Activated CD4-positive, alpha-beta T cell treated with anti-CD3 and anti-CD28 coated beads for 36 hours (primary cell): ENCODE measurements at regions of chr17 and their contacts with region 1.

Region 1: DNA sequence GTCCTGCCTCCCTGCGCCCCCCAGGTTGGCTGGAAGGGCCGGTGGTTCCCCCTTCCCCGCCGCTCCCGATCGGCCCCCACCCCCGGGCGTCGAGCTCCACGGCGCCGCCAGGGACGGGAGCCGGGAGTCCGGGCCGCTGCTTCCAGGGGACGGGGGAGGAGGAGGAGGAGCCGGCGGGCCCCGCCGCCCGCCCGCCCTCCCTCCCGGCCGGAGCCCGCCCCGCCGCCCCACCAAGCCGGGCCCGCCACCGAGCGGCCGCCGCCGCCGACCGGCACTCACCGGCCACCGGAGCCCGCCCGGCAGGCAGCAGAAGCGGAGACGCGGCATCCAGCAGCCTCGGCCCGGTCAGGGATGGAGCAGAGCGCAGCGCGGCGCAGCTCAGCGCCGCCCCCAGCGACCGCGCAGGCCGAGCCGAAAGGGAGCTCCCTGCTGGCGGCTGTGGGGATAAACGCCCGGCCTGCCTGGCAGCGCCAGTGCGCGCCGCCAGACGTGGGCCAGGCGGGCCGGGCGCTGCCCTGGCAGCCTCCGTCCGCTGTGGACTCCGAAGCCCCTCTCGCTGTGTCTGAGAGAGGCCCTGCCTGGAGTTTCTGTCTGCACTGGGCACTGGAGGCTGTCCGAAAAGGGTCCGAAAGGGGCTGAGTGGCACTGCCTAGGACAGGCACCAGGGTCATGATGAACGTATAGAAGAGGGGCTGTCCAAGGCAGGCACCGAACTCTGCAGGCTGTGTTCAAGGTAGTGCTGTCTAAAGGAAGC is at the start of gene MYO18A:
- DNase-seq: peak; percentile 90
- ATAC-seq: peak; percentile 93
- H3K4me3 Mint-ChIP-seq: peak within 1 kb of the TSS; percentile 23
- H3K27ac Mint-ChIP-seq: no peak within 1 kb of the TSS
- H3K4me1 Mint-ChIP-seq: peaks cover 28% of the 10 kb centered on the region
- H3K27me3 Mint-ChIP-seq: no peaks in the 10 kb centered on the region
- total RNA-seq, gene MYO18A: 31.9 to 38.2 TPM

Region 2: DNA sequence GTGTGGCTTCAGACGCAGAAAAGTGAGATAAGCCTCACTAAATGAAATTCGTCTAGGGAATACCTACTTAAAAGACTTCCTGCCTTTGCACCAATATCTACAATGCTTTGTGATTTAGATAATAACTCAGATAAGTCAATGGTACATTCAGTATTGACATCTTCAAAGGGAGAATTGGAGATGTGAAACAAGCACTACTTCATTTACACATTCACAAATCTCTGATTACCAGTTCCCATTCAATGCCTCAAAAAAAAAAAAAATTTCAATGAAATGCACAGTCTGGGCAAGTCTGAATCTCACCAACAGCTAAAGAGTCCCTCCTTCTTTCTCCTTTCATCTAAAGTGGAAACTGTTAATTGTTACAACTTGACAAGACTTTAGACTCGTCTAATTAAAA is 232.6 kb before region 1 on chr17:
- CTCF ChIA-PET with region 1: no interaction called
- POLR2A ChIA-PET with region 1: no interaction called
- intact Hi-C with region 1: no loop called
- DNase-seq: no peak
- ATAC-seq: no peak
- H3K4me3 Mint-ChIP-seq: no peak overlapping the region
- H3K27ac Mint-ChIP-seq: peak overlapping the region; percentile 92
- H3K4me1 Mint-ChIP-seq: peaks cover 60% of the 10 kb centered on the region
- H3K27me3 Mint-ChIP-seq: no peaks in the 10 kb centered on the region

Region 3: DNA sequence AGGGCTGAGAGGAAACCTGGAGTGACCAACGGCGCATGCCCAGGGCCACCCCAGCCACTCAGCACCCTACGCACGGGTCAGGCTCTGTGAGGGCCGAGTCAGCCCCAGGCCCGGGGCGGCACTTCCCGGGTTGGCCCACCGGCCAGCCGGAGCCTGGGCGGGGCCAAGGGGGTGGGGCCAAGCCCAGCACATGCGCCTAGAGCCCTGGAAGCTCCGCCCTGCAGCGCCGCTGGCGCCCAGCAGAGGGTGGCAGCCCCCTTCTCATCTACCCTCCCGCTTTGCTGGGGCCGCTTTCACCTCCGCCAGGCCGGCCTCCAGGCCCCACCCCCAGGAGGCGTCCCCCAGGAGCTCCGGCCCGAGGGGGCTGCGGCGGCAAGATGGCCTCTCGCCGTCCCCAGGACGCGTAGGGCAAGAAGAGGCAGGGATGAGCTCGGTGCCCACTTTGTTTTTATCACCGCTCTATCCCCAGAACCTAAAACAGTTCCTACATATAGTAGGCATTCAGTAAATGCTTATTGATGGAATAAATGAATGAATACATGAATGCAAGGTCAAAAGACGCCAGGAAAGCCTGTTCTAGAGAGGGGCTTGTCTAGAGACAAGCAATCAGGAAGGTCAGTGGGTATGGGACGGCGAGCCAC is 31.3 kb before region 1 on chr17:
- CTCF ChIA-PET with region 1: interaction called, 300 read pairs
- POLR2A ChIA-PET with region 1: interaction called, 6 read pairs
- intact Hi-C with region 1: loop called (anchors 1 kb)
- DNase-seq: peak; percentile 96
- ATAC-seq: peak; percentile 93
- H3K4me3 Mint-ChIP-seq: peak overlapping the region; percentile 56
- H3K27ac Mint-ChIP-seq: peak overlapping the region; percentile 90
- H3K4me1 Mint-ChIP-seq: peaks cover 48% of the 10 kb centered on the region
- H3K27me3 Mint-ChIP-seq: no peaks in the 10 kb centered on the region

Region 4: GRCh38 chr17:29155227-29155965 is 24.8 kb before region 1 on chr17:
- CTCF ChIA-PET with region 1: interaction called, 300 read pairs
- POLR2A ChIA-PET with region 1: interaction called, 3 read pairs
- intact Hi-C with region 1: loop called in 1 of 2 experiments (anchors 1 kb)
- DNase-seq: peak; percentile 86
- ATAC-seq: peak; percentile 97
- H3K4me3 Mint-ChIP-seq: peak overlapping the region; percentile 45
- H3K27ac Mint-ChIP-seq: peak overlapping the region; percentile 83
- H3K4me1 Mint-ChIP-seq: peaks cover 32% of the 10 kb centered on the region
- H3K27me3 Mint-ChIP-seq: no peaks in the 10 kb centered on the region

Region 5: DNA sequence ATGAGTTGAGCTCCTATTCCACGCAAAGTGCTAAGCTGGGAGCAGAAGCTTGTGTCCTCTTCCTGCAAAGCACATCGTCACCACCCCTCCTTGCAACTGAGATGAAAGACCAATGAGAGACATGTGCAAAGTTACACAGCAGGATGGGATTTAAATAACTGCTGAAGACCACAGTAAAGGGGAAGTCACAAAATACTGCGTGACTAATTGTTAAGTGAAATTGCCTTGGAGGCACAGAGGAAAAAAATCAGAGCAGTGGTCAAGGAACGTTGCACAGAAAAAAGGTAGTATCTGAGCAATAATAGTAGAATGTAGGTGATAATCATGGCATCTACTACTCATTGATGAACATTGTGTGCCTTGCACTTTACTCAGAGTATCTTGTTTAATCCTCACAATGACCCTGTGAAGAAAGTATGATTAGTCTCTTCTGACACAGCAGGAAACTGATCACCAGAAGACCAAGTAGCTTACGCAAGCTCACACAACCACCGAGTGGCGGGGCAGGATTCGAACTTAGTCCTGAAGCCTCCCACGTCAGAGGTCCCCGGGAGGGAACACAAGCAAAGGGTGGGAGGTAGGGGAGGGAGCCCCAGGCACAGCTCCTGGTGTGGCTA is 15.4 kb after region 1 on chr17:
- CTCF ChIA-PET with region 1: interaction called, 19 read pairs
- POLR2A ChIA-PET with region 1: no interaction called
- intact Hi-C with region 1: no loop called
- DNase-seq: no peak
- ATAC-seq: peak; percentile 39
- H3K4me3 Mint-ChIP-seq: no peak overlapping the region
- H3K27ac Mint-ChIP-seq: no peak overlapping the region
- H3K4me1 Mint-ChIP-seq: peaks cover 2% of the 10 kb centered on the region
- H3K27me3 Mint-ChIP-seq: peaks cover 8% of the 10 kb centered on the region

Region 6: DNA sequence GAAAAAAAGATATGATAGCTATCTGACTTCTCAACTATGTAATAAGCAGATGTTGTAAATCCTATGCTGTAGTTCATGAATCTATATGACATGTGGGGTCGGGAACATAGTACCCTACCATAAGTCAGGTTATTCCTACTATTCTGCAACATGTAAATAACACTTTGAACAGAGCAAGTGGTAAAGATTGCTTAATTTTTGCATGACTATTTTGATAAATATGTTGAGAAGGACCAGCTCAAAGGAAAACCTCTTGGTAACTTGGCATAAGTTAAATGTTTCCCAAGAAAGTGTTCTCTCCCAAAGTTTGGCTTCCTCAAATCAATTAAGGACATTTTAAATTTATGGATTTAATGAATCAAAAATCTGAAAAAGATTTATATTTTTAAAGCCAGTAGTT is 324.5 kb after region 1 on chr17:
- CTCF ChIA-PET with region 1: no interaction called
- POLR2A ChIA-PET with region 1: no interaction called
- intact Hi-C with region 1: no loop called
- DNase-seq: no peak
- ATAC-seq: no peak
- H3K4me3 Mint-ChIP-seq: no peak overlapping the region
- H3K27ac Mint-ChIP-seq: no peak overlapping the region
- H3K4me1 Mint-ChIP-seq: no peaks in the 10 kb centered on the region
- H3K27me3 Mint-ChIP-seq: no peaks in the 10 kb centered on the region